ENCODE measurements at regions of chr14 and their contacts with region 1.

Region 1: DNA sequence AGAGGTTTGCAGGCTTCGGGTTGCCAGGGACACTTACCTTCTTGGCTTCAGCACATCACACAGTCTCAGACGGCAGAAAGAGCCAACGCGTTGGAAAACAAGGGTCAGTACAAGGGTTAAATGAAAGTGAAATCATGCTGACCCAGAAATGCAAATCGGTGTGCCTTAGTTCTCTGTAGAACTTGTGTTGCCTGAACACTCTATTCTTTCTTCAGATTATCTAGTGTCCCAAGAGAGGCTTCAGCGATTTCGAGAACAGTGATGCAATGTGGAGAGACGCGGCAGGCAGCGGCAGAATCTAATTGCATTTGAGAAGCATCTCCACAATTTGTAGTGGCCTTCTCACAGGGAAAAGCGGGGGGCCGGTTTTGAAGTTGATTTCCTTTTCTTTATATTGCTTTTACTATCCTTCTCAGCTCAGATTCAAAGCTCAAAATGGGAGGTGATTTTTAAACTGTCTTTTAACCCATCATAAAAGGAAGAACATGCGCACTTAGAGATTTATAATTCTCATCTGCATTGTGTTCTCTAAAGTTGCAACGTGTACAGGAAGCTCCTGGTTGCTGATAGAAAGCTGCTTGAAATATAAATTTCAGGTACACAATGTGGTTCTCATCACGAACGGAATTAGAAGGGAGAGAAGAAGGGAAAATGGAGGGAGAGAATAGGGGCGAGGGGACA is 67.8 kb upstream of the EGLN3 start:
- DNase-seq: peak; percentile 45
- ATAC-seq: peak; percentile 83
- H3K4me3 ChIP-seq: peak overlapping the region; percentile 72
- H3K27ac ChIP-seq: peak overlapping the region; percentile 14
- H3K4me1 ChIP-seq: peaks cover 5% of the 10 kb centered on the region
- H3K27me3 ChIP-seq: no peaks in the 10 kb centered on the region
- CTCF ChIP-seq: no peak
- EP300 ChIP-seq: peak in 1 of 2 experiments; percentile 14; a peak in 1 of 4 replicates
- POLR2A ChIP-seq: 0 out of 2 replicates have a peak, but pooled peaks have one; percentile 39
- RAD21 ChIP-seq: no peak

Region 2: DNA sequence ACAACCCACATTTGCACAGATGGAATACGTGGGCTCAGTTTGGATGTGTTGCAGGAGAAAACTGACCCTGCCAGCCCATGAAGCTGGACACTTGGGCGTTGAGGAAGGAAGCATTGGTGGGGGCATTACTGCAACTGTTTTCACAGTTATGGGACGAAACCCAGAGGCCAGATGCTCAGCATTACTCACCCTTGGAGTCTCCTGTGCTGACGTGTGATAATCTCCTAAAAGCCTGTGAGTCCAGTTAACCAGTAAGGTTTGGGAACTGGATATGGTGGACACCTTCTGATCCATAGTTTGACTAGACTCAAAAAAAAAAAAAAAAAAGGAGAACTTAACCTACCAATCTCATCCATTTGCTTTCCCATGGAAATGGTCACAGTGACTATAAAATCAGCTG is 15.0 kb before region 1 on chr14:
- CTCF ChIA-PET with region 1: interaction called, 5 read pairs
- POLR2A ChIA-PET with region 1: interaction called, 26 read pairs
- RAD21 ChIA-PET with region 1: interaction called, 14 read pairs
- SMC1A ChIA-PET with region 1: interaction called, 132 read pairs
- in situ Hi-C with region 1: no loop called
- intact Hi-C with region 1: no loop called
- DNase-seq: no peak
- ATAC-seq: peak; percentile 19; the same call in 2 of the 3 replicates
- H3K4me3 ChIP-seq: no peak overlapping the region
- H3K27ac ChIP-seq: no peak overlapping the region
- H3K4me1 ChIP-seq: peaks cover 6% of the 10 kb centered on the region
- H3K27me3 ChIP-seq: no peaks in the 10 kb centered on the region
- CTCF ChIP-seq: no peak
- EP300 ChIP-seq: no peak
- POLR2A ChIP-seq: no peak
- RAD21 ChIP-seq: no peak

Region 3: GRCh38 chr14:34030864-34031263 is 12.2 kb after region 1 on chr14:
- CTCF ChIA-PET with region 1: interaction called, 5 read pairs
- POLR2A ChIA-PET with region 1: interaction called, 7 read pairs
- RAD21 ChIA-PET with region 1: interaction called, 8 read pairs
- SMC1A ChIA-PET with region 1: interaction called, 28 read pairs
- in situ Hi-C with region 1: no loop called
- intact Hi-C with region 1: no loop called
- DNase-seq: no peak
- ATAC-seq: no peak
- H3K4me3 ChIP-seq: no peak overlapping the region
- H3K27ac ChIP-seq: no peak overlapping the region
- H3K4me1 ChIP-seq: no peaks in the 10 kb centered on the region
- H3K27me3 ChIP-seq: no peaks in the 10 kb centered on the region
- CTCF ChIP-seq: no peak
- EP300 ChIP-seq: no peak
- POLR2A ChIP-seq: no peak
- RAD21 ChIP-seq: no peak

Region 4: GRCh38 chr14:34038358-34039057 is 19.8 kb after region 1 on chr14:
- CTCF ChIA-PET with region 1: interaction called, 5 read pairs
- POLR2A ChIA-PET with region 1: interaction called, 3 read pairs
- RAD21 ChIA-PET with region 1: interaction called, 23 read pairs
- SMC1A ChIA-PET with region 1: interaction called, 33 read pairs
- in situ Hi-C with region 1: no loop called
- intact Hi-C with region 1: no loop called
- DNase-seq: no peak
- ATAC-seq: no peak
- H3K4me3 ChIP-seq: no peak overlapping the region
- H3K27ac ChIP-seq: no peak overlapping the region
- H3K4me1 ChIP-seq: peaks cover 24% of the 10 kb centered on the region
- H3K27me3 ChIP-seq: no peaks in the 10 kb centered on the region
- CTCF ChIP-seq: no peak
- EP300 ChIP-seq: no peak
- POLR2A ChIP-seq: no peak
- RAD21 ChIP-seq: no peak

Region 5: DNA sequence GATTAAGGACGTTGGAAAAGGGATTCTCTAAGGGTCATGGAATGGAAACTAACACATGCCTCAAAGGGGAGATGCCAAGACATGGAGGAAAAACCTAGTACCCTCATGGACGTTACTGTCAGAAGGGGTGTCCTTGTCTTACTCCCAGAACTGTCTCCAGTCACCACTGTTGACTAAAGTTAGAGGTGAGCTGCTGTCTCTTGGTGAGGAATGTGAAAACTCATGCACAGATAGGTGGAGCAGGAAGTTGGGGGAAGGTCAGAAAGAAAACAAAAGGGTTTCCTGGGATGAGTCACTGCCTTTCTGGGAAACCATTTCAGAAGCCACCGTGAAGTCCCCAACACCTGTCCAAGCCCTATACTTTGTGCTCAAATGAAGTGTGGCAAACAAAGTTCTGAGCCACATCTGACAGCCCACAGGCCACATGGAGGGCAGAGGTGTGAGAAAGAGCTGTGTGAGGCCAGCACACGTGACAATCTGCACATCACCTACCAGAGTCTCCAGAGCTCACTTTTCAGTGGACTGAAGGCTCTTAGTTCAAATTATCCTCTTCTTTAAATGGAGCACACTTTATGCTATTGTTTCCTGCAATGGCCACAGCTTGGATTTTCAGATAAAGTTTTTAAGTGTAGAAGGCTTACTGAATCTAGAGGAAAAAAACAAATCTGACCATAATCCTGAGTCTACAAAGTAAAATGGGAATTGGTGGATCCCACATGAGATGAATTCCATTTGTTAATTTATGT is 25.1 kb after region 1 on chr14:
- CTCF ChIA-PET with region 1: interaction called, 8 read pairs
- POLR2A ChIA-PET with region 1: interaction called, 4 read pairs
- RAD21 ChIA-PET with region 1: interaction called, 23 read pairs
- SMC1A ChIA-PET with region 1: interaction called, 56 read pairs
- in situ Hi-C with region 1: no loop called
- intact Hi-C with region 1: no loop called
- DNase-seq: peak; percentile 97
- ATAC-seq: peak; percentile 97
- H3K4me3 ChIP-seq: peak overlapping the region; percentile 21; the same call in 1 of the 2 replicates
- H3K27ac ChIP-seq: 0 out of 2 replicates have a peak overlapping the region, but pooled peaks have one; percentile 22
- H3K4me1 ChIP-seq: peaks cover 36% of the 10 kb centered on the region
- H3K27me3 ChIP-seq: no peaks in the 10 kb centered on the region
- CTCF ChIP-seq: no peak
- EP300 ChIP-seq: peak; percentile 89 to 92
- POLR2A ChIP-seq: no peak
- RAD21 ChIP-seq: no peak

Region 6: GRCh38 chr14:34051966-34052657 is 33.4 kb after region 1 on chr14:
- CTCF ChIA-PET with region 1: interaction called, 10 read pairs
- POLR2A ChIA-PET with region 1: interaction called, 7 read pairs
- RAD21 ChIA-PET with region 1: interaction called, 16 read pairs
- SMC1A ChIA-PET with region 1: interaction called, 56 read pairs
- in situ Hi-C with region 1: no loop called
- intact Hi-C with region 1: loop called (anchors 5 kb)
- DNase-seq: peak; percentile 76
- ATAC-seq: peak; percentile 78
- H3K4me3 ChIP-seq: no peak overlapping the region
- H3K27ac ChIP-seq: no peak overlapping the region
- H3K4me1 ChIP-seq: peaks cover 28% of the 10 kb centered on the region
- H3K27me3 ChIP-seq: no peaks in the 10 kb centered on the region
- CTCF ChIP-seq: no peak
- EP300 ChIP-seq: peak in 1 of 2 experiments; percentile 49; a peak in 1 of 4 replicates
- POLR2A ChIP-seq: no peak
- RAD21 ChIP-seq: no peak

Region 7: DNA sequence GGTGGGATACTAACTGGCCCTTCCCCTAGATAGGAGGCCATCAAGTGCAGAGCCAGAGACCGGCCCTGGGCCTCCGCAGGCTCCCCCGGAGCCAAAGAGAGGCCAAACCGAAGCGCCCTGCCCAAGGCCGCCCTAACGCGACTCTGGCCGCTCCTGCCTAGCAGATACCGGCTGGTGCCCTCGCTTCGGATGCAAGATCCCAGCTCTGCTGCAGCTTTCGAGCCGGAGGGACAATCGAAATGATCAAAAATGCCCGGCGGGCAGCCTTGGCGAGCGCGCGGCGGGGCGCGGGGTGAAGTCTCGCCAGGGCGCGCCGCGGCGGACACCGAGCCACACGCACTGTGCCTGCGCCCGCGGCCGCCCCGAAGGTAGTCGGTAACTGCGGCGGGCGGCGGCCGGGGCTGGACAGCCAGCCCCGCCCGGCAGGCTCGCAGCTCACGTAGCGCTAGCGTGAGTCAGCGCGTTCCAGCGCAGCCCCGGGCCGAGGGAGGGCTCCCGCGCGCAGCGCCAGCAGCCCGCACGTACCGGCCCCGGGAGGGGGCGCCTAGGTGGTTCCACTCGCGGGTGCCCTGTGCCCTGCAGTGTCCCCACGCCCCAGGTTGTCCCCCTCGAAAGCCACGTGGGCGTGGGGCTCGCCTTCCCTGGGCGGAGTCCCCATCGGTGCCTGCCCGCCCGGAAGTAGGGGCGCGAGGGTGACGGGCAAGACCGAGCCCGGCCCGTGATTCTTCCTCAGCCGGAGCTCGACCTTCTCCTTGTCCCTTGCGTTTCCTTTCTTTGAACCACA is 41.3 kb after region 1 on chr14:
- CTCF ChIA-PET with region 1: interaction called, 10 read pairs
- POLR2A ChIA-PET with region 1: interaction called, 7 read pairs
- RAD21 ChIA-PET with region 1: interaction called, 16 read pairs
- SMC1A ChIA-PET with region 1: interaction called, 22 read pairs
- in situ Hi-C with region 1: no loop called
- intact Hi-C with region 1: no loop called
- DNase-seq: no peak
- ATAC-seq: peak; percentile 91
- H3K4me3 ChIP-seq: peak overlapping the region; percentile 57; the same call in 1 of the 2 replicates
- H3K27ac ChIP-seq: peak overlapping the region; percentile 52; the same call in 1 of the 2 replicates
- H3K4me1 ChIP-seq: peaks cover 20% of the 10 kb centered on the region
- H3K27me3 ChIP-seq: no peaks in the 10 kb centered on the region
- CTCF ChIP-seq: peak in 2 of 3 experiments; percentile 25 to 39; a peak in 3 of 6 replicates
- EP300 ChIP-seq: 0 out of 4 replicates have a peak, but pooled peaks of 1 of the 2 experiments have one; percentile 42
- POLR2A ChIP-seq: peak; percentile 83
- RAD21 ChIP-seq: 0 out of 2 replicates have a peak, but pooled peaks have one; percentile 6

Measured in GM12878 (cell line).